CD8-positive, alpha-beta T cell (primary cell): ENCODE measurements at regions of chr9 and their contacts with region 1.

Region 1: GRCh38 chr9:123975871-123976270 is 35.7 kb upstream of the LHX2 start:
- DNase-seq: no peak
- ATAC-seq: no peak
- H3K4me3 ChIP-seq: no peak overlapping the region
- H3K4me3 Mint-ChIP-seq: no peak overlapping the region
- H3K27ac ChIP-seq: no peak overlapping the region
- H3K27ac Mint-ChIP-seq: no peak overlapping the region
- H3K4me1 ChIP-seq: no peaks in the 10 kb centered on the region
- H3K4me1 Mint-ChIP-seq: no peaks in the 10 kb centered on the region
- H3K27me3 ChIP-seq: no peaks in the 10 kb centered on the region
- H3K27me3 Mint-ChIP-seq: peaks cover 12% of the 10 kb centered on the region
- CTCF ChIP-seq: no peak

Region 2: DNA sequence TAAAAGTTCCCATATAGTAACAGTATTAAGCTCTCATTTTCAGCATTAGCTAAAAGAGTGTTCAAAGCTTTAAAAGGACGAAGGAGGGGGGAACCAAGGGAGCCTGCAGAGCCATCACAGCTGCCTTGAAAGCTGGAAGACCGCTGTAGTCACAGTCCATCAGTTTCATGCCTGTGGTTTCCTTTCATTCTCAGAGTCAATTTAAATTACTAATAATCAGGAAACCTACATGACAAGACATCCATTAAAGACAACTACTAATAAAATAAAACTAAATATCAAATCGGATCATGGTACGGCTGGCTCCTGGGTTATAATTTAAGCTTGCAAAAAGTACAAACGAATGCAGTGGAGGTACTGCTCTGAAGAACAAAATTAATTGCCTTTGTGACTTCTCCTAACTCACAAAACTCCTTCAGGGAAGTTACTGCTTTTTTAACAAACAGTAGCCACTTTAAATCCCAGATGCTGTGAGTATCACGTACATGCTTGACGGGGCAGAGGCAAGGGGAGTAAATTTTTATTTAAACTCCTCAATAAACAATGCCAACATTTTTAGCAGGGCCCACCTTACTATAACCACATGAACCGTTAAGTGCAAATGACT is 259.4 kb before region 1 on chr9:
- CTCF ChIA-PET with region 1: no interaction called
- POLR2A ChIA-PET with region 1: no interaction called
- intact Hi-C with region 1: no loop called
- DNase-seq: no peak
- ATAC-seq: no peak
- H3K4me3 ChIP-seq: no peak overlapping the region
- H3K4me3 Mint-ChIP-seq: no peak overlapping the region
- H3K27ac ChIP-seq: no peak overlapping the region
- H3K27ac Mint-ChIP-seq: no peak overlapping the region
- H3K4me1 ChIP-seq: no peaks in the 10 kb centered on the region
- H3K4me1 Mint-ChIP-seq: peaks cover 1% of the 10 kb centered on the region
- H3K27me3 ChIP-seq: no peaks in the 10 kb centered on the region
- H3K27me3 Mint-ChIP-seq: no peaks in the 10 kb centered on the region
- CTCF ChIP-seq: no peak

Region 3: GRCh38 chr9:123997665-123998277 is 21.9 kb after region 1 on chr9:
- CTCF ChIA-PET with region 1: no interaction called
- POLR2A ChIA-PET with region 1: no interaction called
- intact Hi-C with region 1: loop called in 1 of 2 experiments (anchors 2 kb)
- DNase-seq: peak in 1 of 9 experiments; percentile 56
- ATAC-seq: peak; percentile 26
- H3K4me3 ChIP-seq: no peak overlapping the region
- H3K4me3 Mint-ChIP-seq: peak overlapping the region; percentile 81
- H3K27ac ChIP-seq: no peak overlapping the region
- H3K27ac Mint-ChIP-seq: no peak overlapping the region
- H3K4me1 ChIP-seq: peaks cover 27% of the 10 kb centered on the region
- H3K4me1 Mint-ChIP-seq: peaks cover 27% of the 10 kb centered on the region
- H3K27me3 ChIP-seq: peaks cover 18 to 41% of the 10 kb centered on the region in 2 experiments
- H3K27me3 Mint-ChIP-seq: peaks cover 72% of the 10 kb centered on the region
- CTCF ChIP-seq: no peak

Region 4: DNA sequence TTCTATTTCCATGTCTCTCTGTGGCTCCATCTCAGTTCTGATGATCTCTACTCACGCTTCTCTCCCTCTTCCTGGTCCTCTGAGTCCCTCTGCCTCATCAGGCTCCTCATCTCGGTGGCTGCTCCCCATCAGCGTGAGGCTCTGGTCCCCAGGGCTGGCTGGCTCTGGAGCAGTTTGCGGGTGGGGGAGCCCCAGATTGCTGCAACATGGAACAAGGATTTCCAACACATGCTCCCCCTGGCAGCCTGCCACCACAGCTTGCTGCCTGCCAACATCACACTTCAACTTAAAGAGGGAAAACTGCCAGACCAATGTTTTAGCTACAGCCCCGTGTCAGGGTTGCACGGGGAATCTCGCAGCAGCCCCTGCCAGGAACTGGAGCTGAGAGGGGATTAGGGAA is 204.7 kb after region 1 on chr9:
- CTCF ChIA-PET with region 1: no interaction called
- POLR2A ChIA-PET with region 1: no interaction called
- intact Hi-C with region 1: no loop called
- DNase-seq: no peak
- ATAC-seq: no peak
- H3K4me3 ChIP-seq: no peak overlapping the region
- H3K4me3 Mint-ChIP-seq: no peak overlapping the region
- H3K27ac ChIP-seq: no peak overlapping the region
- H3K27ac Mint-ChIP-seq: no peak overlapping the region
- H3K4me1 ChIP-seq: no peaks in the 10 kb centered on the region
- H3K4me1 Mint-ChIP-seq: no peaks in the 10 kb centered on the region
- H3K27me3 ChIP-seq: peaks cover 0 to 3% of the 10 kb centered on the region in 2 experiments
- H3K27me3 Mint-ChIP-seq: peaks cover 13% of the 10 kb centered on the region
- CTCF ChIP-seq: no peak